B cell (primary cell): ENCODE measurements at regions of chr12 and their contacts with region 1.

Region 1: DNA sequence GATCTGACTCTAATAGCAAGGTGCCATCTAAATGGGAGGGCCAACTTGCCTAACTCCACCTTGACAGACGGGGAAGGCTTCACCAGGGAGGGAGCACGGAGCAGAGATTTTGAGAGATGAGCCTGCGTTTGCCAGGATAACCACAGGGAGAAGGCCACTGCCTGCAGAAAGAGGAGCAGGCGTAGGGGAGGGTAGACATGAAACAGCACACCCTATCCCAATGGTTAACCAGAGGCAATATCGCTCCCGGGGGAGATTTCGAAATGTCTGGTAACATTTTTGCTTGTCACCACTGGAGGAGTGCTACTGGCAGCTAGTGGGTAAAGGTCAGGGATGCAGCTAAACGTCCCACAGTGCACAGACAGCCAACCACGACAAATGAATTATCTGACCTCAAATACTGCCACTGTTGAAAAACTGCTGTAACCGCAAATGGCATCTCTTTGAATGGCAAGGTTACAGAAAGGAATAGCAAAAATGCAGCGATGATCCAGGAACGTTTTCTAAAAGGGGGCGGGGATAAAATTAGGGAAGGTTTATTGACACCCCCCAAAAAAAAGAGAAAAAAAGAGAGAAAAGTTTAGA is 126.0 kb upstream of the ATF7IP start:
- DNase-seq: peak; percentile 80
- ATAC-seq: peak; percentile 79
- H3K4me3 ChIP-seq: peak overlapping the region; percentile 26 to 53 (median 39)
- H3K4me3 Mint-ChIP-seq: peak overlapping the region; percentile 88
- H3K27ac ChIP-seq: peak overlapping the region; percentile 96 to 99
- H3K27ac Mint-ChIP-seq: peak overlapping the region; percentile 100
- H3K4me1 ChIP-seq: peaks cover 34 to 35% of the 10 kb centered on the region in 2 donors
- H3K4me1 Mint-ChIP-seq: peaks cover 35% of the 10 kb centered on the region
- H3K27me3 ChIP-seq: no peaks in the 10 kb centered on the region
- H3K27me3 Mint-ChIP-seq: no peaks in the 10 kb centered on the region
- CTCF ChIP-seq: no peak

Region 2: DNA sequence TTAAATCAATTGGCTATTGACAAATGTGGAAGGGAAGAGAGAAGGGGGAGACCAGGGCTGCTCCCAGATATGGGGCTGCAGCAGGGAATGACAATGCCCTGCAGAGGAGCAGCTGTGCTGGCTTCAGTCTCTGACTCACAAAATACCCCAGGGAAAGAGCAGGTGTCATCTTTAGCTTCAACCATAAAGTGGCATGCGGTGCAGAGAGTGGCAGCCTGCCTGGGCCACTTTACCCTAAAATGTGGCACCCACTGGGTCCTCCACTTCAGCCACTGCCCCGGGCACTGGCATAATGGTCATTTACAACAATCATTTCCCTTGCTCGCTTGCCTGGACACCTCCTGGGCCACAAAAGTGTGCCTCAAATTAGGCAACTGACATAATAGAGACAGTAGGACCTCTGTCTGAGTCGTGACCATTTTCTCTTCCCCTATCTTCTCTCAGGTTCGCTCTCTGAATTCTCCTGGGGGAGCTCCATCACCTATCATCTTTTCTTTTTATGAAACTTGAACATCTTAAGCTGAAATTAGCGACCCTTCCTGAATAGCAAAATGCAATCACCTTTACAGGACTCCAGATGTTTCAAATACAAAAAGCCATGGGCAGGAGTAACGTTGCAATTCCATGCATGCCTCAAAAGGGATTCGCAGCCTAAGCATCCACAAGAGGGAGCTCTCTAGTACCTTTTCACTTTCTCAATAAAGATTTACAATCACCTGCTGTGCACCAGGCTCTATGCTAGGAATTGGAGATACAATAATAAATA is 53.8 kb before region 1 on chr12:
- CTCF ChIA-PET with region 1: interaction called, 37 read pairs
- POLR2A ChIA-PET with region 1: no interaction called
- intact Hi-C with region 1: no loop called
- DNase-seq: peak; percentile 69
- ATAC-seq: peak; percentile 76
- H3K4me3 ChIP-seq: peak overlapping the region in 3 of 5 experiments; percentile 30 to 52 (median 40)
- H3K4me3 Mint-ChIP-seq: peak overlapping the region; percentile 85
- H3K27ac ChIP-seq: no peak overlapping the region
- H3K27ac Mint-ChIP-seq: peak overlapping the region; percentile 88
- H3K4me1 ChIP-seq: peaks cover 13 to 21% of the 10 kb centered on the region in 2 donors
- H3K4me1 Mint-ChIP-seq: peaks cover 20% of the 10 kb centered on the region
- H3K27me3 ChIP-seq: no peaks in the 10 kb centered on the region
- H3K27me3 Mint-ChIP-seq: no peaks in the 10 kb centered on the region
- CTCF ChIP-seq: peak; percentile 81

Region 3: DNA sequence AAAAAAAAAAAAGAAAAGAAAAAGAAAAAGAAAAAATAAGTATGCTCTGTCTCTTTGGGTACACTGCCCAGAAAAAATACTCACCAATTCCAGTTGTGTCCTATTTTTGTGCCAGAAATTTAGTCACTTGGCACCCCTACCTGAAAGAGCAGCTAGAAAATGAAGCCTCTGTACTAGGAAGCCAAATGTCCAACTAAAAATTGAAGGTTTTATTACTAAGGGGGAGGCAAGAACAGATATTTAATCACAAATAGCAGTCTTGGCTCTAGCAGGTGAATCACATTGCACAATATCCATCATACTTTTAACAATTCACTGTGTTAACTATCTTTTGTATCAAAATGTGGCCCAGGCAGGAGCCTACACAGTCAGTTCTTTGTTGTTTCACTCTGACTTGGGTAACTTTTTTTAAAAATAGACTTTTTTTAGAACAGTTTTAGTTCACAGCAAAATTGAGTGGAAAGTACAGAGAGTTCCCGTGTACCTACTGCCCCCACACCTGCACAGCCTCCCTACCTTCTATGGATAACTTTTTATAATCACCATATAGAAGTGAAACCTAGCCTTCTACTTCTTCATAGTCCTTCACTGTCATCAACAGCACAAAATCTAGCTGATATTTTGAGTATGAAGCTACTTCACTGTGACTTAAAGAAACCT is 39.0 kb after region 1 on chr12:
- CTCF ChIA-PET with region 1: interaction called, 12 read pairs
- POLR2A ChIA-PET with region 1: interaction called, 6 read pairs
- intact Hi-C with region 1: loop called (anchors 1 kb)
- DNase-seq: peak; percentile 61
- ATAC-seq: peak; percentile 38
- H3K4me3 ChIP-seq: peak overlapping the region in 1 of 5 experiments; percentile 34
- H3K4me3 Mint-ChIP-seq: peak overlapping the region; percentile 46
- H3K27ac ChIP-seq: peak overlapping the region; percentile 72 to 82
- H3K27ac Mint-ChIP-seq: peak overlapping the region; percentile 92
- H3K4me1 ChIP-seq: peaks cover 65 to 93% of the 10 kb centered on the region in 2 donors
- H3K4me1 Mint-ChIP-seq: peaks cover 63% of the 10 kb centered on the region
- H3K27me3 ChIP-seq: no peaks in the 10 kb centered on the region
- H3K27me3 Mint-ChIP-seq: no peaks in the 10 kb centered on the region
- CTCF ChIP-seq: no peak

Region 4: GRCh38 chr12:14417715-14418114 is 178.3 kb after region 1 on chr12:
- CTCF ChIA-PET with region 1: interaction called, 14 read pairs
- POLR2A ChIA-PET with region 1: no interaction called
- intact Hi-C with region 1: loop called (anchors 1 kb)
- DNase-seq: peak; percentile 67
- ATAC-seq: peak; percentile 48
- H3K4me3 ChIP-seq: no peak overlapping the region
- H3K4me3 Mint-ChIP-seq: peak overlapping the region; percentile 75
- H3K27ac ChIP-seq: no peak overlapping the region
- H3K27ac Mint-ChIP-seq: peak overlapping the region; percentile 62
- H3K4me1 ChIP-seq: peaks cover 21 to 42% of the 10 kb centered on the region in 2 donors
- H3K4me1 Mint-ChIP-seq: peaks cover 53% of the 10 kb centered on the region
- H3K27me3 ChIP-seq: no peaks in the 10 kb centered on the region
- H3K27me3 Mint-ChIP-seq: no peaks in the 10 kb centered on the region
- CTCF ChIP-seq: no peak

Region 5: DNA sequence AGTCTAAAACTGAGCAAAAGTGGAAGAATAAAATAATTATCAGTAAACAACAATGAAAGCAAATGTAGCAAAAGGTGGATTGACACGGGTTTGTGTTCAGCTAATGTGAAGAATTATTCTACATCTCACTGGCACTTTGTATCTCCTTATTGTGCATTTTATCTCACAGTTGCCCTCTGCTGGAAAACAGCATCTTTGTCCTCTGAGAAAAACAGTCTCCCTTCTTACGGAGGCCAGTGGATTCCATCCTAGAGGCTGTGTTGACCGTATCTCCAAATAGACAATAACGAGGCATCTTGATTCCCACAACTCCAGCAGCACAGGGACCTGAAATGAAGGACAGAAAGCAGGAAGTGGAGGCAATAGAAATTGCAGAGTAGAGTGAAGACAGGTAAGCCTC is 379.5 kb after region 1 on chr12:
- CTCF ChIA-PET with region 1: interaction called, 33 read pairs
- POLR2A ChIA-PET with region 1: interaction called, 3 read pairs
- intact Hi-C with region 1: loop called (anchors 1 kb)
- DNase-seq: peak; percentile 32
- ATAC-seq: no peak
- H3K4me3 ChIP-seq: no peak overlapping the region
- H3K4me3 Mint-ChIP-seq: no peak overlapping the region
- H3K27ac ChIP-seq: no peak overlapping the region
- H3K27ac Mint-ChIP-seq: peak overlapping the region; percentile 17
- H3K4me1 ChIP-seq: peaks cover 34 to 40% of the 10 kb centered on the region in 2 donors
- H3K4me1 Mint-ChIP-seq: peaks cover 42% of the 10 kb centered on the region
- H3K27me3 ChIP-seq: no peaks in the 10 kb centered on the region
- H3K27me3 Mint-ChIP-seq: no peaks in the 10 kb centered on the region
- CTCF ChIP-seq: peak; percentile 23

Region 6: DNA sequence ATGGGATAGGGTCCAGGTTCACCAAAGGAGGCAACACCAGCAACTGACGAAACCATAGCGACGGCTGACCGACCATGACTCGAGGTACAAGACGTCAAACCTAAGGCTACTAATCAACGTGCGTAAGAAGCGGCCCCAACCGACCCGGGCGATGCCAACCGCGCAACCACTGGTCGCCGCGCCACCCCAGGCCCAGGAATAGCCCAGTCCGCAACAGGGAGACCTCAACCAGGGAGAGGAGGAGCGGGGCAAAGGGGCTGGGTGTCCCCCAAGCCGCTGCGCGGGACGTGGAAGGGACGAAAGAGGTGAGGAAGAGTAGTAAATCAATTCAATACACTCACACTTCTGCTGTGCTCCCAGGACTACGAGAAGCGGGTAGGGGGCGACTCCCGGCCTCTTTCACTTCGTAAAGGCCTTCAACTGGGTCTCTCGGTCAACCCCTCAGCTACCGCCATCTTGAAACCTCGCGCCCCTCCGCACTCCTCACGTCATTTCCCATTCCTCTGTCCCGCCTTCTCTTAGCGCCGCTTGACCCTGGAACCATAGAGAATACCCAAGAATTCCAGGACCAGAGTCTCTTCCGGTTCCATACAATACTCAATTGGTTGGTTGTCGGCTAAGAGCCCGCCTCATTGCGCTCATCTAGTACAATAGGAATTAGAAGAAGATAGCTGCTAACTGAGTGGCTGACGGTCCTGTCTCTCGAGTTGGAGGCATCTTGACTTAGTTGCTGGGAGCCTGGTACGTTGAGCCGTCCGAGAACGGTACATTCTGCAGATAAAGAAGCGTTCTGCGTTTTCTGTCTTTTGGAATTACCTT is 563.8 kb after region 1 on chr12 and contains the starts of genes C12orf60 and WBP11:
- CTCF ChIA-PET with region 1: no interaction called
- POLR2A ChIA-PET with region 1: no interaction called
- intact Hi-C with region 1: loop called (anchors 1 kb)
- DNase-seq: peak; percentile 96
- ATAC-seq: peak; percentile 94
- H3K4me3 ChIP-seq: peak within 1 kb of the TSS; percentile 89 to 99 (median 93)
- H3K4me3 Mint-ChIP-seq: no peak within 1 kb of the TSS
- H3K27ac ChIP-seq: peak within 1 kb of the TSS; percentile 98
- H3K27ac Mint-ChIP-seq: peak within 1 kb of the TSS; percentile 41
- H3K4me1 ChIP-seq: peaks cover 13 to 17% of the 10 kb centered on the region in 2 donors
- H3K4me1 Mint-ChIP-seq: peaks cover 11% of the 10 kb centered on the region
- H3K27me3 ChIP-seq: no peaks in the 10 kb centered on the region
- H3K27me3 Mint-ChIP-seq: no peaks in the 10 kb centered on the region
- CTCF ChIP-seq: no peak
- total RNA-seq, gene C12orf60: 1.2 and 1.4 TPM in 2 replicates
- total RNA-seq, gene WBP11: 77.3 and 84.7 TPM in 2 replicates